PC-9 (cell line): ENCODE measurements at regions of chr4 and their contacts with region 1.

Region 1: DNA sequence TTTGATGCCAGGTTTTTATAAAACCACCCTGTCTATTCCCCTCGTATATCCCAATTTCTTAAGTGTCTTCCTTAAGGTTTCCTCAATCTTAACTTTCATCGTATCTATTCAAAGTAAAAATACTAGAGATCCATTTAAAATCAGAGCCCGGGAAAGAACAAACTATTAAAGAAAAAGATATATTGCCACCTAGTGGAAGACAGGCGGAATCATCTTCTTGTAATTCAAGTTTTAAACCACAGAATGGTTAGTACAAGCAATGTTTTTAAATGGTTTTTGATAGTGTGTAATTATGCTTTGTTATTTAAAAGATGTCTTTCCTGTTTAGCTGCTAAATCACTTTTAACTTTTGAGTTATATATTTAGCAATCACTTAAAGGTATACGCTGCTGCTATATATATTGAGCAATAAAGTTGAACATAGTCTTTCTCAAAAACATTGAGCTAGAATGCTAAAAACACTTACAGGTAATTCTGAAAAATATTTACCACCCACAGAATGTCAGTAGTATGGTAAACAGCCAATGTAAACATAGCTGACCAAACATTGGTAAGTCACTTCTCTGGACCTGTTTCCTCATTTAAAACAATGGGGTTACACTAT is 18.2 kb downstream of the PRDM8 start:
- DNase-seq: no peak
- H3K4me3 ChIP-seq: no peak overlapping the region
- H3K27ac ChIP-seq: no peak overlapping the region
- H3K4me1 ChIP-seq: no peaks in the 10 kb centered on the region
- H3K27me3 ChIP-seq: no peaks in the 10 kb centered on the region
- CTCF ChIP-seq: peak; percentile 68

Region 2: GRCh38 chr4:78951862-78952472 is 1263.6 kb before region 1 on chr4:
- CTCF ChIA-PET with region 1: no interaction called
- POLR2A ChIA-PET with region 1: no interaction called
- intact Hi-C with region 1: loop called (anchors 5 kb)
- DNase-seq: no peak
- H3K4me3 ChIP-seq: no peak overlapping the region
- H3K27ac ChIP-seq: no peak overlapping the region
- H3K4me1 ChIP-seq: no peaks in the 10 kb centered on the region
- H3K27me3 ChIP-seq: no peaks in the 10 kb centered on the region
- CTCF ChIP-seq: peak; percentile 77

Region 3: GRCh38 chr4:79042079-79042674 is 1173.4 kb before region 1 on chr4:
- CTCF ChIA-PET with region 1: no interaction called
- POLR2A ChIA-PET with region 1: no interaction called
- intact Hi-C with region 1: loop called (anchors 5 kb)
- DNase-seq: peak in 1 of 2 experiments; percentile 5
- H3K4me3 ChIP-seq: no peak overlapping the region
- H3K27ac ChIP-seq: no peak overlapping the region
- H3K4me1 ChIP-seq: no peaks in the 10 kb centered on the region
- H3K27me3 ChIP-seq: no peaks in the 10 kb centered on the region
- CTCF ChIP-seq: peak; percentile 70

Region 4: DNA sequence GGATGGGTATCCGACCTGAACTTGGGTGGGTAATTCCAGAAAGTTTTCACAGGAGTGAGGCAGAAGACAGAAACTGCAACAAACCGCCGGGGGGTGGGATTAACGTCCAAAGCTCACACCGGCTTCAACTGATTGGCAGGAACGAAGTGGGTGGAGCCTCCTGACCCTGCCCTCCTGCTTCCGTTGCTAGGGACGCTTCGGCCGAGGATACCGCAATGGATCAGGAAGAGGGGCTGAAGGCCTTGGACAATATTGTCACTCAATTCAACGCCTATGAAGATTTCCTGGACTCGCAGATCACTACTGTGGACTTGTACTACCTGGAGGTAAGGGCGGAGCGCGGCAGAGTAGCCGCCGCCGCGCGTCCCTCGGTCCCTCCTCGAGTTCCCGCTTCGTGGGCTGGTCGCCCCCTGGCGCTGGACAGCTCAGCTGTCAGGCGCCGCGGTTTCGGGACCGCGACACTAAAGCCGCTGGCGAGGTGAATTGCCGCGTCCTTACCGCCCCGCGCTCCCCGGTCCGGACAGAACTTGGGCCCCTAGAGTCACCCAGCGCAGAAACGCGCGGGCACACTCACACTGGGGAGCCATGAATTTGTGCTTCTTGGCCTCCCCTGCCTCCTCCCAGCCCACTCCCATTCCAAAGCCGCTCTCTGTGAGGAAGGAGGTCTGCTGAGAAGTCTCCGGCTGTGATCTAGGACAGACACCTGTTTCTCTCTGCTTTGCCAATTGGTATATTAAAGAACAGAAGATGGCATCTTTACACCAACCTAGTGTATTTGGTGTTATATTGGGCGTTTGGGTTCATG is 120.2 kb after region 1 on chr4 and contains the start of gene CFAP299:
- CTCF ChIA-PET with region 1: interaction called, 3 read pairs
- POLR2A ChIA-PET with region 1: no interaction called
- intact Hi-C with region 1: loop called (anchors 5 kb)
- DNase-seq: peak; percentile 64 to 73
- H3K4me3 ChIP-seq: peak within 1 kb of the TSS; percentile 88
- H3K27ac ChIP-seq: no peak within 1 kb of the TSS
- H3K4me1 ChIP-seq: no peaks in the 10 kb centered on the region; the same call in 1 of the 2 replicates
- H3K27me3 ChIP-seq: no peaks in the 10 kb centered on the region
- CTCF ChIP-seq: peak; percentile 58
- total RNA-seq, gene CFAP299: not detected in 2 replicates

Region 5: DNA sequence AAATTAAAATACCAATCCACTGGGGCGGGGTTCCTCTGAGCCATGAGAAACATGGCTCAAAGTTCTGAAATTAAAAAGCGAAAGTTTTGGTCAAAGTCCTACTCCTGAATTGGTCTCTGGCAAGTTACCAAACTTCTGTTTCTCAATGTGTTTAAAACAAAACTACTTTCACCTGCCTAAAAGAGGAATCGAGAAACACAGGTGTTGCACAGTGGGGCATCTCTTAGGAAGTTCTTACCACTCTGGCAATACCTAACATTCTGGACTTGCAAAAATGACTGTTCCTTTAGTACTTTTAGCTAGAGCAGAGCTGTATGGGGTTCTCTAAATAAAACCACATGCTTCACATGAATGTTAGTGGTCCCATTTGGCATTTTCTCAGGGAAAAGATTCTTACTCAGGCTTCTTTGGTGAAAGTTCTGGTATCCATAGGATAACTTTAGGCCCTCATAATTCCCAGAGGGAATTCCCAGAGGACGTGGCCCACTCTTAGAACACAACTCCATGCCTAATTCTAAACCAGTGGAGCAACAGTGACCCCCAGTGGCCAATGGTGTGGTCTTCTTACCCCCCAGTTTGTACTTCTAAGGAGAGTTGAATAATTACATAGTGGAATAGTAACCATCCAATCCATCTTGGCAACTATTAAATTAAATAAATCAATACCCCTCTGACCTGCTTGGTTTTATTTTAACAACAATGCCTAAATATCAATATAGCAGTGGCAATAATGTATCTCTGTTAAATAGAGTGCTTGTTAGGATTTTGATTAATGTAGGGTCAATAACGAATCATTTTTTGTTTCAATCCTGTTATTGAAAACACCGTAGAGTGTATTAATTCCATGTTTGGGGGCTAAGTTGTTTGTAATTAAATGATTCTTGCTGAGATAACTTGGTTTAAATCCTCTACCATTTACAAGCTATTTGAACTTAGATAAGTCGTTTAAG is 836.8 kb after region 1 on chr4:
- CTCF ChIA-PET with region 1: no interaction called
- POLR2A ChIA-PET with region 1: no interaction called
- intact Hi-C with region 1: loop called (anchors 5 kb)
- DNase-seq: peak; percentile 44 to 46
- H3K4me3 ChIP-seq: no peak overlapping the region
- H3K27ac ChIP-seq: no peak overlapping the region
- H3K4me1 ChIP-seq: no peaks in the 10 kb centered on the region
- H3K27me3 ChIP-seq: no peaks in the 10 kb centered on the region
- CTCF ChIP-seq: peak; percentile 76